ENCODE measurements at regions of chr22 and their contacts with region 1.

Region 1: GRCh38 chr22:31107178-31107893 is at the start of gene SELENOM:
- DNase-seq: peak; percentile 96
- ATAC-seq: peak; percentile 98
- H3K4me3 ChIP-seq: peak within 1 kb of the TSS; percentile 90 to 97
- H3K27ac ChIP-seq: peak within 1 kb of the TSS; percentile 75
- H3K4me1 ChIP-seq: peaks cover 14 to 25% of the 10 kb centered on the region in 2 experiments; a peak in 3 of 4 replicates
- H3K27me3 ChIP-seq: no peaks in the 10 kb centered on the region
- CTCF ChIP-seq: peak; percentile 94 to 98 (median 97); a peak in 5 of 6 replicates
- POLR2A ChIP-seq: no peak
- RAD21 ChIP-seq: peak; percentile 97
- total RNA-seq, gene SELENOM: 65.6 TPM

Region 2: GRCh38 chr22:30856741-30857502 is 250.4 kb before region 1 on chr22:
- CTCF ChIA-PET with region 1: no interaction called
- POLR2A ChIA-PET with region 1: no interaction called
- RAD21 ChIA-PET with region 1: no interaction called
- intact Hi-C with region 1: no loop called
- DNase-seq: no peak
- ATAC-seq: no peak
- H3K4me3 ChIP-seq: no peak overlapping the region
- H3K27ac ChIP-seq: no peak overlapping the region
- H3K4me1 ChIP-seq: no peaks in the 10 kb centered on the region
- H3K27me3 ChIP-seq: no peaks in the 10 kb centered on the region
- CTCF ChIP-seq: no peak
- POLR2A ChIP-seq: no peak
- RAD21 ChIP-seq: no peak

Region 3: GRCh38 chr22:31055635-31056159 is 51.6 kb before region 1 on chr22:
- CTCF ChIA-PET with region 1: no interaction called
- POLR2A ChIA-PET with region 1: no interaction called
- RAD21 ChIA-PET with region 1: no interaction called
- intact Hi-C with region 1: no loop called
- DNase-seq: no peak
- ATAC-seq: peak; percentile 72
- H3K4me3 ChIP-seq: no peak overlapping the region
- H3K27ac ChIP-seq: no peak overlapping the region
- H3K4me1 ChIP-seq: peaks cover 0 to 11% of the 10 kb centered on the region in 2 experiments; a peak in 2 of 4 replicates
- H3K27me3 ChIP-seq: no peaks in the 10 kb centered on the region
- CTCF ChIP-seq: no peak
- POLR2A ChIP-seq: no peak
- RAD21 ChIP-seq: no peak

Region 4: DNA sequence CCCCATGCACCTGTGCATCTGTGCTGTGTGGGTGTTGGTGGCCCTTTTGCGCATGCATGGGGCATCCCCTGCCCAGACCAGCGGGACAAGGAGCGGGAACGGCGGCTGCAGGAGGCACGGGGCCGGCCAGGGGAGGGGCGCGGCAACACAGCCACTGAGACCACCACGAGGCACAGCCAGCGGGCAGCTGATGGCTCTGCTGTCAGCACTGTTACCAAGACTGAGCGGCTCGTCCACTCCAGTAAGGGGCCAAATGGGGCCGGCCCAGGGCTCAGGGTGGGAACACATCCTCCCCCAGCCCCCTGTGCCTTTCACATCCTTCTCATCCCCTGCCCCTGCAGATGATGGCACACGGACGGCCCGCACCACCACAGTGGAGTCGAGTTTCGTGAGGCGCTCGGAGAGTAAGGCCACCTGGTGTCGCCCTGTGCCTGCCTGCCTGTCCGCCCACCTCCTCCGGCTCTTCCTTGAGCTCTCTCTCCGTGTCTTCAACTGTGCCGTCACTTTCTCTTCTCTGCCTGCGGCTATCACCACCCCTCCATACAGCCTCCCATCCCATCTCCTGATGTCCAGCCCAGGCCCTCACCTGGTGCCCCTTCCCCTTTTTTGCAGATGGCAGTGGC is 10.6 kb before region 1 on chr22:
- CTCF ChIA-PET with region 1: interaction called, 14 read pairs
- POLR2A ChIA-PET with region 1: interaction called, 4 read pairs
- RAD21 ChIA-PET with region 1: interaction called in 1 of 2 experiments, 3 read pairs
- intact Hi-C with region 1: no loop called
- DNase-seq: no peak
- ATAC-seq: no peak
- H3K4me3 ChIP-seq: no peak overlapping the region
- H3K27ac ChIP-seq: no peak overlapping the region
- H3K4me1 ChIP-seq: peaks cover 0 to 5% of the 10 kb centered on the region in 2 experiments; a peak in 2 of 4 replicates
- H3K27me3 ChIP-seq: no peaks in the 10 kb centered on the region
- CTCF ChIP-seq: no peak
- POLR2A ChIP-seq: no peak
- RAD21 ChIP-seq: no peak

Region 5: GRCh38 chr22:31122532-31123291 is 15.4 kb after region 1 on chr22 and contains the start of gene INPP5J:
- CTCF ChIA-PET with region 1: interaction called, 14 read pairs
- POLR2A ChIA-PET with region 1: interaction called, 6 read pairs
- RAD21 ChIA-PET with region 1: no interaction called
- intact Hi-C with region 1: no loop called
- DNase-seq: peak; percentile 44
- ATAC-seq: peak; percentile 93
- H3K4me3 ChIP-seq: peak within 1 kb of the TSS; percentile 70 to 73
- H3K27ac ChIP-seq: peak within 1 kb of the TSS; percentile 47; the same call in 1 of the 2 replicates
- H3K4me1 ChIP-seq: peaks cover 9 to 25% of the 10 kb centered on the region in 2 experiments
- H3K27me3 ChIP-seq: no peaks in the 10 kb centered on the region
- CTCF ChIP-seq: no peak
- POLR2A ChIP-seq: peak; percentile 53
- RAD21 ChIP-seq: no peak
- total RNA-seq, gene INPP5J: 8.9 TPM

Region 6: GRCh38 chr22:31148953-31149627 is 41.8 kb after region 1 on chr22:
- CTCF ChIA-PET with region 1: interaction called, 57 read pairs
- POLR2A ChIA-PET with region 1: interaction called, 8 read pairs
- RAD21 ChIA-PET with region 1: interaction called, 6 to 8 read pairs
- intact Hi-C with region 1: loop called (anchors 1 kb)
- DNase-seq: peak; percentile 66
- ATAC-seq: peak; percentile 96
- H3K4me3 ChIP-seq: no peak overlapping the region
- H3K27ac ChIP-seq: no peak overlapping the region
- H3K4me1 ChIP-seq: peaks cover 0 to 15% of the 10 kb centered on the region in 2 experiments; a peak in 2 of 4 replicates
- H3K27me3 ChIP-seq: no peaks in the 10 kb centered on the region
- CTCF ChIP-seq: peak; percentile 90 to 99 (median 93)
- POLR2A ChIP-seq: no peak
- RAD21 ChIP-seq: peak; percentile 96

Region 7: GRCh38 chr22:31160328-31160978 is 53.1 kb after region 1 on chr22:
- CTCF ChIA-PET with region 1: interaction called, 16 read pairs
- POLR2A ChIA-PET with region 1: no interaction called
- RAD21 ChIA-PET with region 1: interaction called in 1 of 2 experiments, 3 read pairs
- intact Hi-C with region 1: no loop called
- DNase-seq: no peak
- ATAC-seq: peak; percentile 48
- H3K4me3 ChIP-seq: peak overlapping the region; percentile 88 to 90
- H3K27ac ChIP-seq: peak overlapping the region; percentile 70; the same call in 1 of the 2 replicates
- H3K4me1 ChIP-seq: peaks cover 8 to 14% of the 10 kb centered on the region in 2 experiments; a peak in 3 of 4 replicates
- H3K27me3 ChIP-seq: no peaks in the 10 kb centered on the region
- CTCF ChIP-seq: no peak
- POLR2A ChIP-seq: no peak
- RAD21 ChIP-seq: no peak

Region 8: GRCh38 chr22:31230871-31231621 is 123.7 kb after region 1 on chr22:
- CTCF ChIA-PET with region 1: interaction called, 9 read pairs
- POLR2A ChIA-PET with region 1: no interaction called
- RAD21 ChIA-PET with region 1: no interaction called
- intact Hi-C with region 1: loop called (anchors 1 kb)
- DNase-seq: no peak
- ATAC-seq: peak; percentile 67
- H3K4me3 ChIP-seq: no peak overlapping the region
- H3K27ac ChIP-seq: no peak overlapping the region
- H3K4me1 ChIP-seq: peaks cover 0 to 5% of the 10 kb centered on the region in 2 experiments; a peak in 1 of 4 replicates
- H3K27me3 ChIP-seq: no peaks in the 10 kb centered on the region
- CTCF ChIP-seq: peak; percentile 34 to 45 (median 43); a peak in 4 of 6 replicates
- POLR2A ChIP-seq: no peak
- RAD21 ChIP-seq: peak; percentile 67

Region 9: GRCh38 chr22:31272522-31273446 is 165.4 kb after region 1 on chr22:
- CTCF ChIA-PET with region 1: interaction called, 32 read pairs
- POLR2A ChIA-PET with region 1: no interaction called
- RAD21 ChIA-PET with region 1: interaction called, 4 to 7 read pairs
- intact Hi-C with region 1: loop called (anchors 1 kb)
- DNase-seq: peak; percentile 32
- ATAC-seq: peak; percentile 88
- H3K4me3 ChIP-seq: no peak overlapping the region
- H3K27ac ChIP-seq: 0 out of 2 replicates have a peak overlapping the region, but pooled peaks have one; percentile 22
- H3K4me1 ChIP-seq: no peaks in the 10 kb centered on the region
- H3K27me3 ChIP-seq: no peaks in the 10 kb centered on the region
- CTCF ChIP-seq: peak; percentile 69 to 80 (median 77)
- POLR2A ChIP-seq: no peak
- RAD21 ChIP-seq: peak; percentile 76